ENCODE measurements at regions of chr17 and their contacts with region 1.

Region 1: GRCh38 chr17:29116804-29117772 is 63.1 kb downstream of the MYO18A start:
- DNase-seq: peak; percentile 71 to 79
- H3K4me3 ChIP-seq: no peak overlapping the region
- H3K4me3 Mint-ChIP-seq: no peak overlapping the region
- H3K27ac Mint-ChIP-seq: peak overlapping the region; percentile 33
- H3K4me1 ChIP-seq: no peaks in the 10 kb centered on the region
- H3K4me1 Mint-ChIP-seq: no peaks in the 10 kb centered on the region
- H3K27me3 ChIP-seq: no peaks in the 10 kb centered on the region
- H3K27me3 Mint-ChIP-seq: no peaks in the 10 kb centered on the region
- CTCF ChIP-seq: peak; percentile 85 to 92

Region 2: GRCh38 chr17:29133146-29133713 is 16.1 kb after region 1 on chr17:
- CTCF ChIA-PET with region 1: interaction called, 12 read pairs
- POLR2A ChIA-PET with region 1: no interaction called
- intact Hi-C with region 1: no loop called
- DNase-seq: no peak
- H3K4me3 ChIP-seq: no peak overlapping the region
- H3K4me3 Mint-ChIP-seq: no peak overlapping the region
- H3K27ac Mint-ChIP-seq: no peak overlapping the region
- H3K4me1 ChIP-seq: no peaks in the 10 kb centered on the region
- H3K4me1 Mint-ChIP-seq: no peaks in the 10 kb centered on the region
- H3K27me3 ChIP-seq: no peaks in the 10 kb centered on the region
- H3K27me3 Mint-ChIP-seq: no peaks in the 10 kb centered on the region
- CTCF ChIP-seq: no peak

Measured in Caco-2 (cell line).